BJ (cell line): ENCODE measurements at regions of chr1 and their contacts with region 1.

Region 1: DNA sequence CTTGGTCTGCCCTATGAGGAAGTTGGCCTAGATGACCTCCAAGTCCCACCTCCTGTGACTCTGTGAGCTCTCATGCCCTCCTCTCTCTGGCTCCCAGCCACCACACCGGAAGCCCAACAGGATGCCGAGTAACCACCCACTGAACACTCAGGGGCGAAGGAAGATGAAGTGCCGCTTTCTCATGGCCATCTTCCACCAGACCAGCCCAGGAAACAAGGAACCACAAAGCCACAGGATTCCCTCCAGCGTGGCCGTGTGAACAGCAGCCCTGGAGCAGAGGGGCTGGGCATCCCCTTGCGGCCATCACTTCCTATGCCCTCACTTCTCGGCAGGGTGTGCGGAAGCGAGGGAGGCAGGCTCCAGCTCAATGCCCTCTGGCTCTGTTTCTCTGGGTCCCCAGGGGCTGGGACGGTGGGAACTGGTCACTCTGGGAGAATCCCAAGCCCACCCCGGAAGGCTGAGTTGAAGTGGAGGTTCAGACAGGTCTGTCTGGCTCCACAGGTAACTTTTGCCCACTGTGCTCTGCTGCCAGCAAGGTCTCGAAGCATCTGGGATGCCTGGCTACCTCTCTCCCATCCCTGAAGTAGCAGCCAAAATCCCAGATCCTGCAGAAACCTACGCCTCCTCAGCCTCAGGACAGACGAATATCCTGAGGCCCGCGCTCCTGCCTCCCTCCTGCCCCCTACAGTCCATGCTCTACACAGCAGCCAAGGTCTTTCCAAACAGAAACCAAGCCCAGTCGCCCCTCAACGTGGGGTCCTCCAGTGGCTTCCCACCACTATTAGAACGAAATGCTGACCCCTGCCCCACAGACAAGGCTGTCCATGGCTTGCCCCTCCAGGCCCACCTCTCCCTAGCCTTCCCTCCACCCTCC is 44.2 kb upstream of the ECE1 start:
- DNase-seq: peak; percentile 66
- H3K4me3 ChIP-seq: peak overlapping the region; percentile 7; the same call in 1 of the 2 replicates
- H3K27me3 ChIP-seq: no peaks in the 10 kb centered on the region
- CTCF ChIP-seq: peak; percentile 96

Region 2: GRCh38 chr1:20329793-20330542 is 1004.5 kb before region 1 on chr1:
- CTCF ChIA-PET with region 1: no interaction called
- POLR2A ChIA-PET with region 1: no interaction called
- DNase-seq: no peak
- H3K4me3 ChIP-seq: no peak overlapping the region
- H3K27me3 ChIP-seq: no peaks in the 10 kb centered on the region; the same call in 1 of the 2 replicates
- CTCF ChIP-seq: 0 out of 2 replicates have a peak, but pooled peaks have one; percentile 17

Region 3: GRCh38 chr1:21261551-21262281 is 72.7 kb before region 1 on chr1:
- CTCF ChIA-PET with region 1: interaction called, 47 read pairs
- POLR2A ChIA-PET with region 1: no interaction called
- DNase-seq: peak; percentile 88
- H3K4me3 ChIP-seq: no peak overlapping the region
- H3K27me3 ChIP-seq: no peaks in the 10 kb centered on the region
- CTCF ChIP-seq: no peak

Region 4: GRCh38 chr1:21270086-21270689 is 64.3 kb before region 1 on chr1:
- CTCF ChIA-PET with region 1: interaction called, 17 read pairs
- POLR2A ChIA-PET with region 1: no interaction called
- DNase-seq: no peak
- H3K4me3 ChIP-seq: no peak overlapping the region
- H3K27me3 ChIP-seq: no peaks in the 10 kb centered on the region
- CTCF ChIP-seq: peak; percentile 96

Region 5: GRCh38 chr1:21302747-21303715 is 31.4 kb before region 1 on chr1:
- CTCF ChIA-PET with region 1: interaction called, 19 read pairs
- POLR2A ChIA-PET with region 1: no interaction called
- DNase-seq: peak; percentile 88
- H3K4me3 ChIP-seq: no peak overlapping the region
- H3K27me3 ChIP-seq: no peaks in the 10 kb centered on the region
- CTCF ChIP-seq: no peak; the same call in 1 of the 2 replicates